HEK293 (cell line): ENCODE measurements at regions of chr1 and their contacts with region 1.

Region 1: DNA sequence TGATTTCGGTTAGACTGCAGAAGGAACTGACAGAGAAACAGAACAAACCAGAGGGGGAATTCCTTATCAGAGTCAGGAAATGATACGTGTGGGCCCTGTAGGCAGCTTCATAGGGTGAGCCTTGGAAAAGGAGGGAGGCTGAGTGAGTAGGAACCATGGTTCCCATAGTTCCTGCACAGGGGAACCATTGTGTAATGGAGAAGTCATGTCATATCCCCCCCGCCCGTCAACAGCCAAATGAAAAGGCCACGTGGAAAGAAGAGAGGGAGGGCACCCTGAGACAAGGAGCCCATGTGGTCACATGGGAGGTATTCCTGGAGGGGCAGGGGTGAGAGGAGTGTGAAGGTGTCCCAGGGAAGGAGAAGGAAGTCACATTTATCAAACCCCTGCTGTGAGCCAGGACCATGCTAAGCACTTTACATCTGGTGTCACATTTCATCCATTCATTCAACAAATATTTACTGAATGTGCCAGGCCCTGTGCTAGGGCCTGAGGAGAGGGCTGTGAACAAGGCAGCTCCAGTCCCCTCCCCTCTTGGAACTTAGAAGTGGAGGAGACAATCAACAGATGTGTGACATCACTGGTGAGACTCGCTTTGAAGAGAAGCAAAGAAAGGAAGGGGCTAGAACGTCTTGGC is 15.7 kb upstream of the FGR start:
- H3K4me3 ChIP-seq: no peak overlapping the region
- H3K27ac ChIP-seq: no peak overlapping the region
- H3K4me1 ChIP-seq: peaks cover 5% of the 10 kb centered on the region
- CTCF ChIP-seq: no peak

Region 2: GRCh38 chr1:27609210-27609555 is 41.5 kb before region 1 on chr1:
- CTCF ChIA-PET with region 1: interaction called, 10 read pairs
- POLR2A ChIA-PET with region 1: interaction called, 6 read pairs
- H3K4me3 ChIP-seq: no peak overlapping the region
- H3K27ac ChIP-seq: no peak overlapping the region
- H3K4me1 ChIP-seq: no peaks in the 10 kb centered on the region
- CTCF ChIP-seq: no peak

Region 3: DNA sequence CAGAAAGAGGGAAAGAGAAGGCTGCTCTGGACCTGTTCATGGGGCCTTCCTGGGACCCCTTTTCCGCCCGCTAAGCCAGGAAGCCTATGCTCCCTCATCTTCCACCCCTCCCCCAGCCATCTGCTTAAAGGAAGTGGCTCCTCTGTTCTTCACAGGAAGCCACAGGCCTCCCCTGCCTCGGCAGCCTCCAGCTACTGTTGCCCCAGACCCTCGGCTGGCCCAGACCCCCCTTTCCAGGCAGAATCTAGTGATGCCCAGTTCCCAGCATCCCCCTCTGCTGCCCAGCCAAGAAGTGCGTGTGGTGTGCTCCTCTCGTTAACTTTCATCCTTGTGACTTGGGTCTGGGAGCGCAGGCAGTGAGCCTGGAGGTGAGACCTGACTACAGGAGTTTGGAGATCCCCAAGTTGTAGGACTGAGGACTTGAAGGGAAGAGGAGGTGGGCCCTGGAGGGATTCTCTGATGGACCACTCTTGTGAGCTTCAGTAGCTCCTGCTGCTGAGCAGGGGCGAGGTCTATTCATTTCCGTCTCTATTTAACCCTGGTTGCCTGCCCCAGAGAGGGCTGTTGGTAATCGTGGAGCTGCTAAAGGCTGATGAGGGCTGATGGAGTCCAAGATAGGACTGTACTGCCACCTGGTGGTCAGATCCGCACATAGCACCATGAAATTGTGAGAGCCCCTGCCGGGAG is 12.2 kb after region 1 on chr1:
- CTCF ChIA-PET with region 1: interaction called, 30 read pairs
- POLR2A ChIA-PET with region 1: no interaction called
- H3K4me3 ChIP-seq: no peak overlapping the region
- H3K27ac ChIP-seq: no peak overlapping the region; the same call in 1 of the 2 replicates
- H3K4me1 ChIP-seq: no peaks in the 10 kb centered on the region
- CTCF ChIP-seq: peak; percentile 88

Region 4: DNA sequence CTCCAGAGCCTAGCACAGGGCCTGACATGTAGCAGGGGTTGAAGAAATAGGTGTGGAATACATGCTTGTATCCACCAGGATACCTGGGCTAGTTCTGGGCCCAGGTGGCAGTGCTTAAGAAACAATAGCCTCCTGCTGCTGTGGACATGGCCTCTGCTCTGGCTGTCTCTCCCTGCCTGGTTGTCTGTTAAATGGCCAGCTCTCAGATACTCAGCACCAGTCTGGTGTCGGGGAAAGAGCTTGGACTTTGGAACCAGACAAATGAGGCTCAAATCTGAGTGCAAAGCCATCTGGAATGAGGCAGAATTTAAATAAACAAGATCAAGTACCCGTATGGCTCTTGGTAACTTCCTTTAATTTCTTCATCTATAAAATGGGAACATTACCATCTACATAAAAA is 640.2 kb after region 1 on chr1:
- CTCF ChIA-PET with region 1: no interaction called
- POLR2A ChIA-PET with region 1: no interaction called
- H3K4me3 ChIP-seq: no peak overlapping the region
- H3K27ac ChIP-seq: no peak overlapping the region
- H3K4me1 ChIP-seq: no peaks in the 10 kb centered on the region
- CTCF ChIP-seq: no peak